ENCODE measurements at regions of chr4 and their contacts with region 1.

Region 1: GRCh38 chr4:185254434-185254833 is 45.0 kb downstream of the SNX25 start:
- DNase-seq: no peak
- H3K4me3 Mint-ChIP-seq: peak overlapping the region; percentile 20
- H3K27ac Mint-ChIP-seq: peak overlapping the region; percentile 61
- H3K4me1 Mint-ChIP-seq: peaks cover 59% of the 10 kb centered on the region
- H3K27me3 Mint-ChIP-seq: no peaks in the 10 kb centered on the region

Region 2: DNA sequence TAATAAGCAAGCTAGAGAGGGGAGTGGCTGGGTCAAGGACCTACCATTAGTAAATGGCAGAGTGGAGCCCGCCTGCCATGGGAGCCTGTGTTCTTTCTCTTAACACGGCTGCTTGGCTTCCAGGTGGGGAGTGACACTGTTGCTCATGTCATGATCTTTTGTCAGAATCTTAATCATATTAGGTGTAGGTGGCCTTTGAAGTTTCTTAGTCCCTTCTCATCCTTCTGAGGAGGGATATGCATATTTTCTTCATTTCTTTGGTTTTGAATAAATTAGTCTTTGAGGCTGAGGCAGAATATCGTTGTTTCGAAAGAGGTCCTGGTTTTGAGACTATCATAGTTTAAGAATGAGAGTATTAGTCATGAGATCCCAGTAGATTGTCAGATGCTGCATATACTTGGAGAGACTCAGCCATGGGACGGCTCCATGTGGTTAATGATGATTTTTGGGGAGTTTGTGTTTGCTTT is 16.2 kb before region 1 on chr4:
- CTCF ChIA-PET with region 1: no interaction called
- POLR2A ChIA-PET with region 1: no interaction called
- intact Hi-C with region 1: loop called (anchors 1 kb)
- DNase-seq: peak; percentile 64
- H3K4me3 Mint-ChIP-seq: peak overlapping the region; percentile 49
- H3K27ac Mint-ChIP-seq: peak overlapping the region; percentile 68
- H3K4me1 Mint-ChIP-seq: peaks cover 33% of the 10 kb centered on the region
- H3K27me3 Mint-ChIP-seq: no peaks in the 10 kb centered on the region

Region 3: DNA sequence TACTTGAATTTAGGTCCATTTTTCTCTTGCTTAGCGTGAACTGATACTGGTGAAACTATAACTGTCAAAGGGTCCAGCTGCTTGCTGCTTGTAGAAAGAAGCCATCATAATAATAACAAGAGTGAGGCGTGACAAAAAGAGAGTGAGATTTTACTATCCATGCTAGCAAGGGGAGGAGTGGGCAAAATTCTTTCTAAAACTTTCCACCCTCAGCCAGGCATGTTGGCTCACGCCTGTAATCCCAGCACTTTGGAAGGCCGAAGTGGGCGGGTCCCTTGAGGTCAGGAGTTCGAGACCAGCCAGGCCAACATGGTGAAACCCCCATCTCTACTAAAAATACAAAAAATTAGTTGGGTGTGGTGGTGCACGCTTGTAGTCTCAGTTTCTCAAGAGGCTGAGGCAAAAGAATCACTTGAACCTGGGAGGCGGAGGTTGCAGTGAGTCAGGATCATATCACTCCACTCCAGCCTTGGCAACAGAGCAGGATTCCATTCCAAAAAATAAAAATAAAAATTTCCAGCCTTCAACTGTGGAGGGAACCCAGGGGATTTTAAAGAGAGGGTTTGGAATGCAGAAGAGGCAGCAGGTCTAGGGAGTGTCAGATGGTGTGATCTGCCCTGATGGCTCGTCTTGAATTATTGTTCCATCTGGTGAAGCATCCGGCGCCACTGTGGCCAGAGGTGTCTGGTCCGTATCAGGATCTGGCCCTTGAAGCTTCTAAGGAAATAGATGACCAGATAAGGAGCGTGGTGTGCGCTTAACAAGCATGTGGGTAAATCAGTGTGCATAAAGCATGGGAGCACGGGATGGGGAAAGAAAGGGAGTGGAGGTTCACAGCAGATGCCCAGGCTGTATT is 89.5 kb after region 1 on chr4:
- CTCF ChIA-PET with region 1: no interaction called
- POLR2A ChIA-PET with region 1: no interaction called
- intact Hi-C with region 1: loop called (anchors 5 kb)
- DNase-seq: peak; percentile 33
- H3K4me3 Mint-ChIP-seq: no peak overlapping the region
- H3K27ac Mint-ChIP-seq: peak overlapping the region; percentile 79
- H3K4me1 Mint-ChIP-seq: peaks cover 65% of the 10 kb centered on the region
- H3K27me3 Mint-ChIP-seq: no peaks in the 10 kb centered on the region